CD8-positive, alpha-beta T cell (primary cell): ENCODE measurements at regions of chr4 and their contacts with region 1.

Region 1: DNA sequence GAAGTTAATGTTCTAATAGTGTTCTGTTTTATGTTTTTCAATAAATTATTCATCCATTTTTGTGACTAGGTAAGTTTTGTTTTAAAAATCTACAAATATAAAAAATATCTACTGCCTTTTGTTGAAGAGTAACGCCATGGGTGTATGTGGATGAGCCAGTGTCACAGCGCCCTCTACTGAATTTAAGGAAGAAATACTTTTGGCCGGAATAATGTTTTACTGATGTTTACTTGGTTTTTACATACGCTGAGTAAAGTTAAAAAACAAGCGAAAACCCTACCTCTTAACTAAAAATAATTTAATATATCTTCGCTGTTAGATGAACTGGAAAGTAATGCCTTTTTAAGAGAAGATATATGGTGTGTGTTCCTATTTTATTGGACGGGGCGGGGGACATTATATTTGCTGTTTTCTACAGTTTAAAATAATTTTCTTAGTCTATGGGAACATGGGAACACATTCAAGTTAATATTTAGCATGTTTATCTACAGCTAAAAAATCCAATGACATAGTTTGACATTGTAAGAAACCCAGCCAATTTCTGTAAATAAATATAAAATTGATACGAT is 86.1 kb downstream of the CPE start:
- DNase-seq: peak in 4 of 9 experiments; percentile 9 to 66 (median 35)
- ATAC-seq: peak; percentile 42
- H3K4me3 ChIP-seq: no peak overlapping the region
- H3K4me3 Mint-ChIP-seq: no peak overlapping the region
- H3K27ac ChIP-seq: no peak overlapping the region
- H3K27ac Mint-ChIP-seq: no peak overlapping the region
- H3K4me1 ChIP-seq: no peaks in the 10 kb centered on the region
- H3K4me1 Mint-ChIP-seq: no peaks in the 10 kb centered on the region
- H3K27me3 ChIP-seq: no peaks in the 10 kb centered on the region
- H3K27me3 Mint-ChIP-seq: peaks cover 3% of the 10 kb centered on the region
- CTCF ChIP-seq: peak; percentile 86

Region 2: DNA sequence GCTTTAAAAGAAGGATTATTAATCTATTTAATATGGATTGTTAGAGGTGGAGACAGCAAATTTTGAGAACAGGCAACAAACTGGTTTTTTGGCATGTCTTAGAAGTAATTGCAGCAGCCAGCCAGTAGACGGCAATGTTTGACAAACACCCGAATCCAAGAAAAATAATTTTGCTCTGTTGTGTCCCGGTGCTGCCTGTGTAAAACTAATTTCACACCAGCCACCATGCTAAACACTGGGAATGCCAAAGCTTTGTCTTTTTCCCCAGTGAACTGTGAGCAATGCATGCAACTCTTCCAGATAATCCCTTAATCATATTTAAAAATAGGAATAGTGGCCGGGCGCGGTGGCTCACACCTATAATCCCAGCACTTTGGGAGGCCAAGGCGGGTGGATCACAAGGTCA is 685.1 kb before region 1 on chr4:
- CTCF ChIA-PET with region 1: no interaction called
- POLR2A ChIA-PET with region 1: no interaction called
- intact Hi-C with region 1: loop called in 1 of 2 experiments (anchors 2 kb)
- DNase-seq: peak in 2 of 9 experiments; percentile 18 to 40
- ATAC-seq: no peak
- H3K4me3 ChIP-seq: no peak overlapping the region
- H3K4me3 Mint-ChIP-seq: no peak overlapping the region
- H3K27ac ChIP-seq: no peak overlapping the region
- H3K27ac Mint-ChIP-seq: no peak overlapping the region
- H3K4me1 ChIP-seq: no peaks in the 10 kb centered on the region
- H3K4me1 Mint-ChIP-seq: no peaks in the 10 kb centered on the region
- H3K27me3 ChIP-seq: no peaks in the 10 kb centered on the region
- H3K27me3 Mint-ChIP-seq: no peaks in the 10 kb centered on the region
- CTCF ChIP-seq: peak; percentile 66

Region 3: DNA sequence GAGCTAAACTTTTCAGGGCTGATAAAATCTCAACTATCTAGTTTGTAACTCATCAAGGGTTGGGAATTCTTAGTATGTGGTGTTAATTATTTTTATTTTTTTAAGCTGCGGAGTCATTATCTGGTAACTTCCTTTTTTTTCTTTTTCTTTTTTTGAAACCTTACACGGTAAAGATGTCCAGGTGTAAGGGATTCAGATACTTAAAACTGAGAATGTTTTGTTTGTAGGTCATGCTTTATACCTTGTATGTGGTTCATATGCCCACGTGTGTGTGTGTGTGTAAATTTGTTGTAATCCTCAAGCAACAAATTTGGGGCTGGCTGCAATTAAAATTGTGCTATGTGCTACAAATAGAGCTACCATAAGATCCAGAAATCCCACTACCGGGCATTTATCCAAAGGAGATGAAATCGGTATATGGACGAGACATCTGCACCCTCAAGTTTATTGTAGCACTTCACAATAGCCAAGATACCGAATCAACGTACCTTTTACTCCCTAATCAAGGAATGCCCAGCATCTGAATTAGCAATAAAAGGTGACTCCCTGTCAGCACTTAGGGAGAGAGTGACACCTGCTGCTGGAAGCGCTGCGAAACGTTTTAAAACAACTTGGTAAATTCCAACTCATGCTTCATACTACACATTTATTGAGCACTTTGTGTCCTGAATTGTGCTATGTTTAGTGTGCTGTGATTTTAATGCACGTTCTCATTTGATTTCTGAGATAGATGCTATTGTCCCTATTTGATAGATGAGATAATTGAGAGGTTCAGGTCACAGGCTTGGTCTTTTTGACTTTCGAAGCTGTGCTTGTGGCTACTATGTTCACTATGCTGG is 121.3 kb before region 1 on chr4:
- CTCF ChIA-PET with region 1: interaction called, 3 read pairs
- POLR2A ChIA-PET with region 1: no interaction called
- intact Hi-C with region 1: loop called in 1 of 2 experiments (anchors 10 kb)
- DNase-seq: peak in 2 of 9 experiments; percentile 9 to 42
- ATAC-seq: no peak
- H3K4me3 ChIP-seq: no peak overlapping the region
- H3K4me3 Mint-ChIP-seq: no peak overlapping the region
- H3K27ac ChIP-seq: no peak overlapping the region
- H3K27ac Mint-ChIP-seq: no peak overlapping the region
- H3K4me1 ChIP-seq: no peaks in the 10 kb centered on the region
- H3K4me1 Mint-ChIP-seq: no peaks in the 10 kb centered on the region
- H3K27me3 ChIP-seq: no peaks in the 10 kb centered on the region
- H3K27me3 Mint-ChIP-seq: no peaks in the 10 kb centered on the region
- CTCF ChIP-seq: no peak

Region 4: GRCh38 chr4:165351359-165352130 is 113.4 kb before region 1 on chr4:
- CTCF ChIA-PET with region 1: no interaction called
- POLR2A ChIA-PET with region 1: no interaction called
- intact Hi-C with region 1: loop called (anchors 5 to 10 kb)
- DNase-seq: no peak
- ATAC-seq: no peak
- H3K4me3 ChIP-seq: no peak overlapping the region
- H3K4me3 Mint-ChIP-seq: no peak overlapping the region
- H3K27ac ChIP-seq: no peak overlapping the region
- H3K27ac Mint-ChIP-seq: no peak overlapping the region
- H3K4me1 ChIP-seq: no peaks in the 10 kb centered on the region
- H3K4me1 Mint-ChIP-seq: no peaks in the 10 kb centered on the region
- H3K27me3 ChIP-seq: no peaks in the 10 kb centered on the region
- H3K27me3 Mint-ChIP-seq: peaks cover 14% of the 10 kb centered on the region
- CTCF ChIP-seq: no peak

Region 5: DNA sequence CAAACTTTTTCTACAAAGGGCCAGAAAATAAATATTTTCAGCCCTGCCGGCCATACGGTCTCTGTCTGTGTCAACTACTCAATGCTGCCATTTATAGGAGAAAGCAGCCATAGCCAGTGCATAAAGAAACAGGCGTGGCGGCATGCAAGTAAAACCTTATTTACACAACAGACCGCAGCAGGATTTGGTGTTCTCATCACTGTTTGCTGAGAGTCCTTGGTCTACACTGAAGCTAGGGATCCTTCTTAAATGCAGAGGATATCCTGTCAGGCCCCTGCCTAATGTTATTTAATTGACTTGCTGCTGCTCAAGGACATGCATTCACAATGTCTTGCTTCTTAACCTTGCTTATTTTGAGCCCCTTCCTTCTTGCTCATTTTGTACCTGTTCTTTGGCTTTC is 31.4 kb before region 1 on chr4:
- CTCF ChIA-PET with region 1: no interaction called
- POLR2A ChIA-PET with region 1: no interaction called
- intact Hi-C with region 1: no loop called
- DNase-seq: no peak
- ATAC-seq: no peak
- H3K4me3 ChIP-seq: no peak overlapping the region
- H3K4me3 Mint-ChIP-seq: no peak overlapping the region
- H3K27ac ChIP-seq: no peak overlapping the region
- H3K27ac Mint-ChIP-seq: no peak overlapping the region
- H3K4me1 ChIP-seq: no peaks in the 10 kb centered on the region
- H3K4me1 Mint-ChIP-seq: no peaks in the 10 kb centered on the region
- H3K27me3 ChIP-seq: no peaks in the 10 kb centered on the region
- H3K27me3 Mint-ChIP-seq: peaks cover 25% of the 10 kb centered on the region
- CTCF ChIP-seq: no peak

Region 6: DNA sequence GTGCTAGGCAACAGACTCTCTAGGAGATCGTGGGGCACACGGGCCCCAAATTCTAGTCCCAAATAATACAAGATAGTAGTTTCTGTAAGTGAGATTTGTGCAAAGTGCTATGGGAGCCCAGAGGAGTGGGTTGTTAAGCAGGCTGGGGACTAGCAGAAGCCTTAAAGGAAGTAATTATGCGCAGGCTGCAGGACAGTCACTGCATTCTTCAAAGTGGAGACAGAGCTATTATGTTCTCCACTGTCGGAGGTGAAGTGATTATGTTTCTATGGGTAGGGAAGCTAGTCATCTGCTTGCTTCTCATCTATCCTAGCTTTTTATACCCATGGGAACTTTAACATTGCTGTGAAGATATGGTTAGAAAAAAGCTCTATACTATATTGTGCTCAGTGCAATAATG is 68.1 kb after region 1 on chr4:
- CTCF ChIA-PET with region 1: no interaction called
- POLR2A ChIA-PET with region 1: no interaction called
- intact Hi-C with region 1: no loop called
- DNase-seq: no peak
- ATAC-seq: no peak
- H3K4me3 ChIP-seq: no peak overlapping the region
- H3K4me3 Mint-ChIP-seq: no peak overlapping the region
- H3K27ac ChIP-seq: no peak overlapping the region
- H3K27ac Mint-ChIP-seq: no peak overlapping the region
- H3K4me1 ChIP-seq: no peaks in the 10 kb centered on the region
- H3K4me1 Mint-ChIP-seq: no peaks in the 10 kb centered on the region
- H3K27me3 ChIP-seq: no peaks in the 10 kb centered on the region
- H3K27me3 Mint-ChIP-seq: peaks cover 4% of the 10 kb centered on the region
- CTCF ChIP-seq: no peak

Region 7: GRCh38 chr4:165965513-165965912 is 500.6 kb after region 1 on chr4:
- CTCF ChIA-PET with region 1: no interaction called
- POLR2A ChIA-PET with region 1: no interaction called
- intact Hi-C with region 1: no loop called
- DNase-seq: no peak
- ATAC-seq: no peak
- H3K4me3 ChIP-seq: no peak overlapping the region
- H3K4me3 Mint-ChIP-seq: no peak overlapping the region
- H3K27ac ChIP-seq: no peak overlapping the region
- H3K27ac Mint-ChIP-seq: no peak overlapping the region
- H3K4me1 ChIP-seq: no peaks in the 10 kb centered on the region
- H3K4me1 Mint-ChIP-seq: no peaks in the 10 kb centered on the region
- H3K27me3 ChIP-seq: no peaks in the 10 kb centered on the region
- H3K27me3 Mint-ChIP-seq: no peaks in the 10 kb centered on the region
- CTCF ChIP-seq: no peak